GM10248 (cell line): ENCODE measurements at regions of chr11 and their contacts with region 1.

Region 1: GRCh38 chr11:118592616-118593367 is 14.6 kb upstream of the PHLDB1 start:
- DNase-seq: no peak
- CTCF ChIP-seq: no peak

Region 2: GRCh38 chr11:118610804-118611795 is 18.3 kb after region 1 on chr11:
- CTCF ChIA-PET with region 1: interaction called, 68 read pairs
- POLR2A ChIA-PET with region 1: no interaction called
- DNase-seq: peak; percentile 85
- CTCF ChIP-seq: peak; percentile 94

Region 3: GRCh38 chr11:118640332-118641154 is 47.8 kb after region 1 on chr11:
- CTCF ChIA-PET with region 1: no interaction called
- POLR2A ChIA-PET with region 1: no interaction called
- DNase-seq: no peak
- CTCF ChIP-seq: no peak